Activated CD4-positive, alpha-beta T cell treated with anti-CD3 and anti-CD28 coated beads for 36 hours (primary cell): ENCODE measurements at regions of chr1 and their contacts with region 1.

Region 1: GRCh38 chr1:111656086-111657017 is 36.8 kb downstream of the RAP1A start:
- DNase-seq: peak; percentile 28
- ATAC-seq: no peak
- H3K4me3 Mint-ChIP-seq: no peak overlapping the region
- H3K27ac Mint-ChIP-seq: peak overlapping the region; percentile 52
- H3K4me1 Mint-ChIP-seq: peaks cover 49% of the 10 kb centered on the region
- H3K27me3 Mint-ChIP-seq: no peaks in the 10 kb centered on the region

Region 2: DNA sequence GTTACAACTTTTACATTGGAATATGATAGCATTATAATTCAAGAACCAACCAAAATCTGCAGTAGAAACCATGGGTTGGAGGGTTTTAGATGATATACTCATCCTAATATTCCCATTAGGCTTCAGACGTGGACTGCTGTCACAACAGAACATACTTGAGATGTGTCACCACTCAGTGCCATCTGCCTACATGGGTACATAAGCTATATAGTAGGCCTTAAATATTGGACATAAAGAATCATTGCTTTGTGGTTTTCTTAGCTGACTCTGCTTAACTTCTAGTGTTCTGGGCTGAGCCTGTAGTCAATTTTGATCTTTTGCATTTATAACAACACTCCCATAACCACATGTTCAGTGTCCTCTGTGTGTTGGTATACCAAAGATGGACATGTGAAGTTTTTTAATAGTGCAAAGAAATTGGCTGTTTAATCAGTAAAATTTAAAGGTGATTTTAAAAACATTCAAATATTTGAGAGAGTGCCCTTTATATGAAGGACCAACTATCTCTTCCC is 22.6 kb before region 1 on chr1:
- CTCF ChIA-PET with region 1: no interaction called
- POLR2A ChIA-PET with region 1: no interaction called
- intact Hi-C with region 1: loop called in 1 of 2 experiments (anchors 2 kb)
- DNase-seq: no peak
- ATAC-seq: no peak
- H3K4me3 Mint-ChIP-seq: no peak overlapping the region
- H3K27ac Mint-ChIP-seq: no peak overlapping the region
- H3K4me1 Mint-ChIP-seq: peaks cover 84% of the 10 kb centered on the region
- H3K27me3 Mint-ChIP-seq: no peaks in the 10 kb centered on the region

Region 3: GRCh38 chr1:111679541-111679940 is 23.2 kb after region 1 on chr1:
- CTCF ChIA-PET with region 1: interaction called, 3 read pairs
- POLR2A ChIA-PET with region 1: no interaction called
- intact Hi-C with region 1: loop called in 1 of 2 experiments (anchors 2 kb)
- DNase-seq: no peak
- ATAC-seq: no peak
- H3K4me3 Mint-ChIP-seq: no peak overlapping the region
- H3K27ac Mint-ChIP-seq: no peak overlapping the region
- H3K4me1 Mint-ChIP-seq: peaks cover 18% of the 10 kb centered on the region
- H3K27me3 Mint-ChIP-seq: no peaks in the 10 kb centered on the region

Region 4: GRCh38 chr1:111704776-111705175 is 48.4 kb after region 1 on chr1:
- CTCF ChIA-PET with region 1: no interaction called
- POLR2A ChIA-PET with region 1: no interaction called
- intact Hi-C with region 1: loop called in 1 of 2 experiments (anchors 5 kb)
- DNase-seq: no peak
- ATAC-seq: peak; percentile 65
- H3K4me3 Mint-ChIP-seq: no peak overlapping the region
- H3K27ac Mint-ChIP-seq: peak overlapping the region; percentile 44
- H3K4me1 Mint-ChIP-seq: peaks cover 51% of the 10 kb centered on the region
- H3K27me3 Mint-ChIP-seq: no peaks in the 10 kb centered on the region